Ascending aorta (tissue), 2 donors: ENCODE measurements at regions of chr17 and their contacts with region 1.

Region 1: GRCh38 chr17:35969558-35970380 is 11.5 kb downstream of the CCL16 start:
- DNase-seq: peak in 1 of 2 donors; percentile 84
- H3K4me3 ChIP-seq: no peak overlapping the region
- H3K27ac ChIP-seq: no peak overlapping the region
- H3K4me1 ChIP-seq: no peaks in the 10 kb centered on the region
- H3K27me3 ChIP-seq: no peaks in the 10 kb centered on the region
- CTCF ChIP-seq: peak; percentile 49 to 59 (median 51)

Region 2: GRCh38 chr17:35731239-35731931 is 238.4 kb before region 1 on chr17 and contains the start of gene RASL10B:
- intact Hi-C with region 1: no loop called
- DNase-seq: peak in 1 of 2 donors; percentile 86
- H3K4me3 ChIP-seq: peak within 1 kb of the TSS; percentile 76 to 81
- H3K27ac ChIP-seq: no peak within 1 kb of the TSS
- H3K4me1 ChIP-seq: peaks cover 0 to 14% of the 10 kb centered on the region in 2 donors
- H3K27me3 ChIP-seq: no peaks in the 10 kb centered on the region
- CTCF ChIP-seq: no peak
- total RNA-seq, gene RASL10B: 9.9 TPM

Region 3: DNA sequence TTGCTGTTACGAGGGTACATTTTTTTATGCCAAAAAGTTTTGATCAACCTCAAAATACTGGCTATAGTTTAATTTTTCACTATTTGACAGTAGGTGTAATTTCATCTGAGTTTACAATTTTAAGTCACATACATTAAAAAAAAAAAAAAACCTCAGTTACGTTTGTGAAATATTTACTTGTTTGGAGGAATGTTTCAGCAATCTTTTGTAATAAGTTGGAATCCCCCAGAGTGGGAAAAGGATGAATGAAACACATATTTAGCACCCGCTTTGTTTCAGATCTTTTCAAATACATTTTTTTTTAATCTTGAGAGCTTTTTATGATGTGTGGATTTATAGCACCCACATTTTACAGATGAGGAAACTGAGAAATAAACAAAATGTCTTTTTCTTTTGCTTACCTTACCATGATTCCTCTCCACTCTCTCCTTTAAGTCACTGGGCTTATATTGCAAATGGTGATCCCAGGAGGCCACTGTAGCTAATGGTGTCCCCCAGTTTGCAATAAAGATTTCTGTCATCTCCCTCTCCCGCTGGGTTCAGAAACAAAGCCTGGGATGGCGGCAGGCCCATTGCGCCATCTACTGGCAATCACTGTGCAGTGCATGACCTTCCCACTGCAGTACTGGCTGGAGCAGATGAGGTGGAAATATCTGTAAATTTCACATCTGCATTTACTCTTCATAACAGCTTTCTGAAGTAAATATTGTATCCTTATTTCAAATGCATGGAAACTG is 179.0 kb after region 1 on chr17:
- intact Hi-C with region 1: loop called (anchors 10 kb)
- DNase-seq: peak in 1 of 2 donors; percentile 79
- H3K4me3 ChIP-seq: no peak overlapping the region
- H3K27ac ChIP-seq: no peak overlapping the region
- H3K4me1 ChIP-seq: peaks cover 0 to 4% of the 10 kb centered on the region in 2 donors
- H3K27me3 ChIP-seq: no peaks in the 10 kb centered on the region
- CTCF ChIP-seq: peak; percentile 62 to 91 (median 89)